Left cardiac atrium (tissue), 4 donors: ENCODE measurements at regions of chr18 and their contacts with region 1.

Region 1: GRCh38 chr18:23812546-23813440 is 123.5 kb downstream of the LAMA3 start:
- DNase-seq: no peak
- ATAC-seq: no peak

Region 2: GRCh38 chr18:22964116-22964515 is 848.7 kb before region 1 on chr18:
- intact Hi-C with region 1: no loop called
- DNase-seq: no peak
- ATAC-seq: no peak

Region 3: DNA sequence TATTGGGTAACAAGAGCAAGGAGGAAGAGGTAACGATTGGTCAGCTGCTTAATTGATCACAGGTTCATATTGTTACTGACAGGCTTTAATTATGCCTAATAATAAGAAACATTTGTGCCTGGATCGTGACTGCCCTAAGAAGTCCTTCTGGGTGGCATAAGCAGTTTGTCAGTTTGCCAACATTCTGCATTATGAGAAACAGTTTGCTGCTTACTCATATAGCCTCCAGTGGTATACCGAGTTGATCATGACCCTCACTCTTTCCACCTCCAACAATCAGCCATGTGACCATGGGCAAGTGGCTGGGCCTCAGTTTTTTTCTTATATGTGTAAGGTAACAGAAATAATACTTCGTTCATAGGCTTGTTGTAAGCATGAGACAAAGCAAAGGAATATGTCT is 774.1 kb before region 1 on chr18:
- intact Hi-C with region 1: no loop called
- DNase-seq: no peak
- ATAC-seq: no peak

Region 4: GRCh38 chr18:23529597-23529996 is 283.2 kb before region 1 on chr18:
- intact Hi-C with region 1: loop called in 1 of 2 experiments (anchors 10 kb)
- DNase-seq: no peak
- ATAC-seq: peak in 1 of 2 donors; percentile 13

Region 5: DNA sequence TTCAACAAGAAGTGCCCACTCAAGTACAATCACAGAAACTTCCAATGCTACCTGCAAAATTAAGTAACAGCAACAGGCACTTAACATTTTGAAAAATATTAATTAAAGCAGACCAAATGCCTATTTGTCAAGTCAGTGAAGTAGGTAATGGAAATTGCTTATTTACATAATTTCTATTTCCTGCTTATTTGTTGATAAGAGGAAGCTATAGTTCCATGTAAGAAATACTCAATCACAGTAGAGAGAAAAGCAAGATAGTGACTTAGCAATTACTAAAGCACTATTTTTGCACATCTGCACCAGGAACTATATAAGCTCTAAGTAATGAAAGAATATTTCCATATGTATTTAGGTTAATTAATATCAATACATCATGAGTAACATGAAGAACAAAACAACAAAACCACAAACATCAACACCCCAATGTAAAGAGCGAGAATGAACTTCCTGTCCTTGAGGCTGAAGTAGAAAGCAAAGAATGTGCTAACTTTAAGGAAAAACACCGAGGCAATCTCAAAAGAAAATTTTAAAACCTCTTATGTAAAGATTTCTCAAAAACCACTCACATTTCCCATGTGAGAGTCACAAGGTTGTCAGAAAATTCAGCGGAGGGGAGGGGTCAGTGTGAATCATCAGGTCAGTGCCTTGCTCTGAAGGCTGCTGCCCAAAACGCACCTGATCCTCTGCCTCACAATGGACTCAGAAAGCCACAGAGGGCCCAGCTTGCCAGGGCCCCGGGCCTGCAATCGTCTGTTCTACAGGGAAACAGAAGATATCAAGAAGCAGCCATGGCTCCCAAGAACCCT is 239.0 kb before region 1 on chr18:
- intact Hi-C with region 1: no loop called
- DNase-seq: no peak
- ATAC-seq: peak in 1 of 2 donors; percentile 86

Region 6: DNA sequence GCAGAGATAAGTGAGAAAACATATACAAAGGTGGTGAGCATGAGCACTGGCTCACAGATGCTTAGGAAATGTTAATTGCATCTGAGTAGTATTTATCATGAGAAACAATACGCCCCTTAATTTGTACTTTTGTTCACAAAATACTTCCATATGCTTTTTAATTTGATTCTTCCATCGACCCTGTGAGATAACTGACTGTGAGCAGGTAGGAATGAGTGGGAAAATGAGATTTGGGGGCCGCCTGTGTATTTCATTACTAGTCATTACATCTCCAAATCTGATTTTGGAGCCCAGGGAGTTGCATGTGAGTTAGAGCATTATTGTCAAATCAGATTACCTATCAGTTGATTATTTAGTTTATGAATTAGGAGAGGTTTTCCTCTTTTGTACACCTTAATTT is 189.8 kb before region 1 on chr18:
- intact Hi-C with region 1: loop called (anchors 2 to 10 kb)
- DNase-seq: no peak
- ATAC-seq: no peak

Region 7: GRCh38 chr18:23629444-23629946 is 183.3 kb before region 1 on chr18:
- intact Hi-C with region 1: loop called in 1 of 2 experiments (anchors 10 kb)
- DNase-seq: no peak
- ATAC-seq: no peak

Region 8: GRCh38 chr18:23900994-23901393 is 88.2 kb after region 1 on chr18:
- intact Hi-C with region 1: no loop called
- DNase-seq: no peak
- ATAC-seq: no peak

Region 9: GRCh38 chr18:23918401-23919032 is 105.7 kb after region 1 on chr18:
- intact Hi-C with region 1: loop called in 1 of 2 experiments (anchors 10 kb)
- DNase-seq: peak; percentile 79
- ATAC-seq: peak; percentile 71 to 79